Activated T-helper 2 cell treated with anti-CD3 and anti-CD28 coated beads, Interferon-gamma antibody, Interleukin-2, Interleukin-4, amounts not matched to agents 10 μg/mL and 5 μg/mL and 100 μg/mL, durations not matched to agents 14 hours and 24 hours and 36 hours (primary cell): ENCODE measurements at regions of chr3 and their contacts with region 1.

Region 1: GRCh38 chr3:4776980-4777581 is 202.2 kb upstream of the BHLHE40 start:
- DNase-seq: peak; percentile 37
- H3K4me3 Mint-ChIP-seq: peak overlapping the region; percentile 67
- H3K27ac Mint-ChIP-seq: peak overlapping the region; percentile 100
- H3K4me1 Mint-ChIP-seq: peaks cover 77% of the 10 kb centered on the region
- H3K27me3 Mint-ChIP-seq: no peaks in the 10 kb centered on the region

Region 2: DNA sequence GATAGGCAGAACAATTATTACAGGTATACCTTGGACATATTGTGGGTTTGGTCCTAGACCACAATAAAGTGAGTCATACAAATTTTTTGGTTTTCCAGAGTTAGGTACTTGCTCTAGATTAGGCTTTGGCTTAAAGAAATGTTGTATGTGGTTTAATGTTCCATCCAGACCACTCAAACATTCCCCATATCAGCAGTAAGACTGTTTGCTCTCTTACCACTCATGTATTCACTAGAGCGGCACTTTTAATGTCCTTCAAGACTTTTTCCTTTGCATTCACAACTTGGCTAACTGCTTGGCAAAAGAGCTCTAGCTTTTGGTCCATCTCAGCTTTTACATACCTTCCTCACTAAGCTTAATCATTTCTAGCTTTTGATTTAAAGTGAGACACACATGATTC is 724.4 kb before region 1 on chr3:
- intact Hi-C with region 1: no loop called
- DNase-seq: no peak
- H3K4me3 Mint-ChIP-seq: no peak overlapping the region
- H3K27ac Mint-ChIP-seq: no peak overlapping the region
- H3K4me1 Mint-ChIP-seq: no peaks in the 10 kb centered on the region
- H3K27me3 Mint-ChIP-seq: no peaks in the 10 kb centered on the region

Region 3: DNA sequence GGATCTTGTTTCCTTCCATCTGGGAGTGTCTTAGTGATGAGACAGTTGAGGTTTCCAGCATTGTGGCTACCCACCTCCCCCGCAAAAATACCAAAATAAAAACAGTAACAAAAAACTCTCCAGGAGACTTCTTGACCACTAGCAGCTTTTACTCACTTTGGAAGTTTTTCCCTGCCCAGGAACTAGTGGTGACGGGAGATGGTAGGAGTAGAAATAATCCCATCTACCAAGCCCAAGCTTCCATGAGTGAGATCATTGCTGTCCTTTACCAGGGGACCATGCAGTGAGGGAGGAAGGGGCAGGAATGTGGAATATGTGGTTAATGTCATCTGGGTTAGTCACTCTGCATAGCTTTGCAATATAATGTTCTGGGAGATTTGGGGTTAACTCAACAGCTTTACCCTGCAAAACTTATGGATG is 96.2 kb before region 1 on chr3:
- intact Hi-C with region 1: no loop called
- DNase-seq: no peak
- H3K4me3 Mint-ChIP-seq: no peak overlapping the region
- H3K27ac Mint-ChIP-seq: no peak overlapping the region
- H3K4me1 Mint-ChIP-seq: no peaks in the 10 kb centered on the region
- H3K27me3 Mint-ChIP-seq: no peaks in the 10 kb centered on the region

Region 4: GRCh38 chr3:4712143-4712542 is 64.9 kb before region 1 on chr3:
- intact Hi-C with region 1: loop called (anchors 2 kb)
- DNase-seq: no peak
- H3K4me3 Mint-ChIP-seq: no peak overlapping the region
- H3K27ac Mint-ChIP-seq: no peak overlapping the region
- H3K4me1 Mint-ChIP-seq: peaks cover 28% of the 10 kb centered on the region
- H3K27me3 Mint-ChIP-seq: no peaks in the 10 kb centered on the region

Region 5: DNA sequence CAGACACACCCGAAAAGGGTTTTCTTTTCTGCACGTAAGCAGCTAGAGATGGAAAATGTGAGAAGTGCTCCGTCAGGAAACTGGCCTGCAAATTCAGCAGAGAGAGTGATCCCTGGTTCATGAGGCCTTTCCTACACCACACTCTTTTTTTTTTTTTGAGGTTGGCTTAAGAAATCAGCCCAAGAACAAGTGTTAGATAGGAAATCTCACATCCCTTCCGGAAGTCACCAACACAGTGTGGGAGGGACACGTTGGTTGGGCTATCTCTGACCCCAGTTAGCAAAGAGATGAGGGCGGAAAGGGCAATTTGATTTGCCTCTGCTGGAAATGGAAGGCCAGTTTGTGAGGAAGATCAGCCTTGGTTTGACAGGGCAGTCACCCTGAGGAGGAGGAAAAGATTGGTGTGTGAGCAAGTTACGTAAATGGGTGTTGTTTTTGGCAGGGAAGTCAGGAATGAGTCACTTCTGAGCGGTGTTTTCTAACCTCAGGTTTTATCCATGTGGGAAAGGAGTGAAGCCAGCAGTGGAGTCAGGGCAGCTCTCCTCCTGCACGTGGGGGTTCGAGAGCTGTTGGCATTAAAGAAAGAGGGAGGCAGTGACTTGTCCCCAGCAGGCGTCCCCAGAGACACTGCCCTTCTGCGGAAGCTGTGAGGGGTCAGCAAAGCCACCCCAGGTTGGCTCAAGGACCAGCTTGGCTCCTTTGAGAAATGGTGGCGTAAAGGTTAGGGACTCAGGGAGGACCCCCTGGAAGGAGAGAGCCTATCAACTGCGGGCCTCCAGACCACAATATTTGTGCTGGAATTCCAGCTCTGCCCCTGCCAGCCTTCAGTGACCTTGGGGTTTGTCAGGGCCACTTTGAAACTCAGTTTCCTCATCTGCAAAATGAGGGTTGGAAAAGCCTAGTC is 35.4 kb before region 1 on chr3:
- intact Hi-C with region 1: loop called (anchors 1 kb)
- DNase-seq: no peak
- H3K4me3 Mint-ChIP-seq: no peak overlapping the region
- H3K27ac Mint-ChIP-seq: peak overlapping the region; percentile 87
- H3K4me1 Mint-ChIP-seq: peaks cover 67% of the 10 kb centered on the region
- H3K27me3 Mint-ChIP-seq: no peaks in the 10 kb centered on the region

Region 6: GRCh38 chr3:4804161-4805058 is 27.3 kb after region 1 on chr3:
- intact Hi-C with region 1: loop called (anchors 1 kb)
- DNase-seq: peak; percentile 31
- H3K4me3 Mint-ChIP-seq: peak overlapping the region; percentile 35
- H3K27ac Mint-ChIP-seq: peak overlapping the region; percentile 78
- H3K4me1 Mint-ChIP-seq: peaks cover 62% of the 10 kb centered on the region
- H3K27me3 Mint-ChIP-seq: no peaks in the 10 kb centered on the region

Region 7: DNA sequence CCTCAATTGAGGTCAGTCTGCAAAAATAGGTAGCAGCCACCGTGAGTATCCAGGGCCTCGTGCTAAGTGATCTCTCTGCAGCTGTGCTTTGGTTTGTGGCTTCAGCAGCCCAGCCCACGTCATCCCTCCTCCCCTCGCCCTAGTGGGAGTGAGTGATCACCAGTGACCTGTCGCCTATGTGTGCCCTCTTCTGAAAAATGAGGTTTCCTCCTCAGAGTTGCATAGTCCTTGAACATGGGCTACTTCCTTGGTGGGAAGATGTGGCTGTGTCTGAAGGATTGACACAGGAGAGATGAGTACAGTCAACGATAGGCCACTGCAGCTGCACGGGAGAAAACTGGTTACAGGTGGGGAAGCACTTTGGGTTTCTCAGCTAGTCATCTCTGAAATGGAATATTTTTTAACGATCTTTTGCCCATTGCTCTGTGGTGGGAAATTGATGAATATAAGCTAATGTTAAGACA is 57.4 kb after region 1 on chr3:
- intact Hi-C with region 1: loop called (anchors 1 kb)
- DNase-seq: peak; percentile 74
- H3K4me3 Mint-ChIP-seq: peak overlapping the region; percentile 74
- H3K27ac Mint-ChIP-seq: peak overlapping the region; percentile 96
- H3K4me1 Mint-ChIP-seq: peaks cover 80% of the 10 kb centered on the region
- H3K27me3 Mint-ChIP-seq: no peaks in the 10 kb centered on the region

Region 8: GRCh38 chr3:4888913-4889846 is 112.1 kb after region 1 on chr3:
- intact Hi-C with region 1: loop called (anchors 1 kb)
- DNase-seq: peak; percentile 34
- H3K4me3 Mint-ChIP-seq: peak overlapping the region; percentile 17
- H3K27ac Mint-ChIP-seq: peak overlapping the region; percentile 91
- H3K4me1 Mint-ChIP-seq: peaks cover 58% of the 10 kb centered on the region
- H3K27me3 Mint-ChIP-seq: no peaks in the 10 kb centered on the region

Region 9: GRCh38 chr3:5122030-5122740 is 345.1 kb after region 1 on chr3 and contains the start of gene ARL8B:
- intact Hi-C with region 1: loop called (anchors 1 kb)
- DNase-seq: peak; percentile 88
- H3K4me3 Mint-ChIP-seq: peak within 1 kb of the TSS; percentile 95
- H3K27ac Mint-ChIP-seq: peak within 1 kb of the TSS; percentile 83
- H3K4me1 Mint-ChIP-seq: peaks cover 28% of the 10 kb centered on the region
- H3K27me3 Mint-ChIP-seq: no peaks in the 10 kb centered on the region
- total RNA-seq, gene ARL8B: 37.9 and 40.6 TPM in 2 replicates

Region 10: DNA sequence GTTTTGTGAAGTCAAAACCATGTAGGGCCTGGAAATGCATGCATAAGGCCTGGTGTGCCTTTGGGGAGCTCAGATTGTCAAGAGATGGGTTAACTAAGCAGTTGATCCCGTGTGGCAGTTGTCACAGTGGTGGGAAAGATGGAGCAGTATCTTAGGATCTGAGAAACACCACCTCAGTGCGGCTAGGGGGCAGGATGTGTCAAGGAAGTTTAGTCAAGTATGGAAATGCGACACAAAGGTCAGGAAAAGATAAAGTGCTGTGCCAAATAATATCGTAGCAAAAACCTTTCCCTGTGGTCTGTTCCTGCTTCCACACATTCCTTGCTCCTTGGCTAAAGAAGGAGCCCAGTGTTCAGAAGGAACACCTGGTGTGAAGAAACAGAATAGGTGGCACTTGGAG is 806.8 kb after region 1 on chr3:
- intact Hi-C with region 1: no loop called
- DNase-seq: no peak
- H3K4me3 Mint-ChIP-seq: no peak overlapping the region
- H3K27ac Mint-ChIP-seq: no peak overlapping the region
- H3K4me1 Mint-ChIP-seq: no peaks in the 10 kb centered on the region
- H3K27me3 Mint-ChIP-seq: no peaks in the 10 kb centered on the region